Natural killer cell (primary cell): ENCODE measurements at regions of chr5 and their contacts with region 1.

Region 1: GRCh38 chr5:40755407-40756365 is at the start of gene TTC33:
- DNase-seq: peak; percentile 89 to 95
- ATAC-seq: peak; percentile 90 to 97 (median 94)
- H3K4me3 ChIP-seq: peak within 1 kb of the TSS; percentile 75
- H3K4me3 Mint-ChIP-seq: no peak within 1 kb of the TSS
- H3K27ac ChIP-seq: peak within 1 kb of the TSS; percentile 68
- H3K27ac Mint-ChIP-seq: no peak within 1 kb of the TSS
- H3K4me1 ChIP-seq: peaks cover 5% of the 10 kb centered on the region
- H3K4me1 Mint-ChIP-seq: peaks cover 22 to 24% of the 10 kb centered on the region in 2 donors
- H3K27me3 ChIP-seq: no peaks in the 10 kb centered on the region
- H3K27me3 Mint-ChIP-seq: no peaks in the 10 kb centered on the region
- CTCF ChIP-seq: peak; percentile 57
- total RNA-seq, gene TTC33: 7.3 to 11.4 (median 10.0) TPM

Region 2: DNA sequence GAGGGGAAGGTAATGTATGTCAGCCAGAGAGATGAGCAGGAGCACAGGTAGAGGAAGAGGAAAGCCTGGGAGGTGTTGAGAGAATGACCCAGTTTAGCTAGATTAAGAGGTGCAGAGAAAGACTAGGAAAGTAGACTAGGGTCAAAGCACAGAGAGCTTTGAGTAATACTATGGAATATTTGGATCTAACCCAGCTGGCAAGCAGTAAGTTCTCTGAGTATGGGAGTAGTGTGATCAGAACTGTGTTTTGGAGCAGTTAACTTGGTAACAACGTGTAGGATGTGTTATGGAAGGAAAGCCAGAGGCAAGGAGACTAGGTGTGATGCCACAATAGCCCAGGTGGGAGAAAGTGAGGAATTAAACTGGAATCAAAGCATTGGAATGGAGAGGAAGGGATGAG is 160.9 kb before region 1 on chr5:
- intact Hi-C with region 1: no loop called
- DNase-seq: no peak
- ATAC-seq: no peak
- H3K4me3 ChIP-seq: no peak overlapping the region
- H3K4me3 Mint-ChIP-seq: no peak overlapping the region
- H3K27ac ChIP-seq: no peak overlapping the region
- H3K27ac Mint-ChIP-seq: no peak overlapping the region
- H3K4me1 ChIP-seq: no peaks in the 10 kb centered on the region
- H3K4me1 Mint-ChIP-seq: peaks cover 11 to 29% of the 10 kb centered on the region in 2 donors
- H3K27me3 ChIP-seq: no peaks in the 10 kb centered on the region
- H3K27me3 Mint-ChIP-seq: peaks cover 11% of the 10 kb centered on the region in 2 donors
- CTCF ChIP-seq: no peak

Region 3: GRCh38 chr5:40798012-40798855 is 42.5 kb after region 1 on chr5 and contains the start of gene PRKAA1:
- intact Hi-C with region 1: loop called (anchors 1 kb)
- DNase-seq: peak; percentile 92 to 95
- ATAC-seq: peak; percentile 93 to 99 (median 95)
- H3K4me3 ChIP-seq: peak within 1 kb of the TSS; percentile 97
- H3K4me3 Mint-ChIP-seq: peak within 1 kb of the TSS; percentile 92
- H3K27ac ChIP-seq: peak within 1 kb of the TSS; percentile 96
- H3K27ac Mint-ChIP-seq: peak within 1 kb of the TSS; percentile 89 to 95
- H3K4me1 ChIP-seq: peaks cover 8% of the 10 kb centered on the region
- H3K4me1 Mint-ChIP-seq: peaks cover 43% of the 10 kb centered on the region in 2 donors
- H3K27me3 ChIP-seq: no peaks in the 10 kb centered on the region
- H3K27me3 Mint-ChIP-seq: peaks cover 0 to 7% of the 10 kb centered on the region in 2 donors
- CTCF ChIP-seq: peak; percentile 73
- total RNA-seq, gene PRKAA1: 120 to 165 (median 122) TPM

Region 4: DNA sequence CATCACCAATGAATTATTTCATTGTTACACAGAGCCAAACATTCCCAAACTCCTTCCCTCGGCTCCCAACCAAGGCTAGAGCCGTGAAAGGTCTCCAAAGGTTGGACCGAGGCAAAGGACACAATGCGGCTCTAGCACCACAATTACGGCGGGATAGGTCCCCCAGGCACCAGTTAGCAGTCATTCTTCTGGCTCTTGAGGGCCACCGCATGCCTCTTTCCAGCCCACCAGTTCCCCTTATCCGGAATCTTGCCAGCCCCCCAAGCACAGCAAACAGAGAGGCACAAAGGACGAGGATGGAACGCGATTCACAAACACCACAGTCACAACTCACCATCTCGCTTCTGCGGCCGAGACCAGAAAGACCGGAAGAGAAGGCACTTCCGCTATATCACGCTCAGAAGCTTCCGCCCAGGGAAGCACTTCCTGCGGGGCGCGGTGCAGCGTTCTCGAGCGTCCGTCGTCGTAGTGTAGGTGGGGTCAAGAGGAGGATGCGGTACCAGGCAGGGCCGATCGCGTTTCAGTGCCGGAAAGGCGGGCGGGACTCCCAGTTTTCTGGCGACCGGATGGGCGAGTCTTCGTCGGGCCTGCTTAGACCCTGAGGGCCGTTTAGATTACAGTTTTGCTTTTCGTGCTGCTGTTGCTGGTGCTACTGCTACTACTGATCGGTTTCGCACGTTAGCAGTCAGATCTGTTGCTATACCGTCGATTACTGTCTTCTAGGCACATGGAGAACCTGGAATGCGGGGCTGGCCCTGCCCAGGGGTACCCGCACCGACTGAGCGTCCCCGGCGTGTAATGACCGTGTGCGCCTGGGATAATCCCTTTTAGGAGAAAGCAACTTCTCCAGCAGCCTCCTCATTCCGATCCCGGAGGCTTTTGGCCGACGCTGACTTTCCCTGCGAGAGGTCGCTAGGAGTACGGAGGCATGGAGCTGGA is 79.4 kb after region 1 on chr5 and contains the start of gene RPL37:
- intact Hi-C with region 1: loop called (anchors 1 kb)
- DNase-seq: peak; percentile 82 to 96
- ATAC-seq: peak; percentile 94 to 98 (median 96)
- H3K4me3 ChIP-seq: peak within 1 kb of the TSS; percentile 86
- H3K4me3 Mint-ChIP-seq: peak within 1 kb of the TSS; percentile 97
- H3K27ac ChIP-seq: peak within 1 kb of the TSS; percentile 96
- H3K27ac Mint-ChIP-seq: peak within 1 kb of the TSS; percentile 96 to 99
- H3K4me1 ChIP-seq: peaks cover 17% of the 10 kb centered on the region
- H3K4me1 Mint-ChIP-seq: peaks cover 48 to 54% of the 10 kb centered on the region in 2 donors
- H3K27me3 ChIP-seq: no peaks in the 10 kb centered on the region
- H3K27me3 Mint-ChIP-seq: no peaks in the 10 kb centered on the region
- CTCF ChIP-seq: no peak
- total RNA-seq, gene RPL37: 961 to 1,288 (median 1,179) TPM